Naive thymus-derived CD8-positive, alpha-beta T cell (primary cell): ENCODE measurements at regions of chr7 and their contacts with region 1.

Region 1: GRCh38 chr7:42931834-42932651 is at the starts of genes MRPL32 and PSMA2:
- DNase-seq: peak; percentile 81 to 97 (median 94)
- ATAC-seq: peak; percentile 99
- H3K4me3 Mint-ChIP-seq: peak within 1 kb of the TSS; percentile 89 to 100 (median 99)
- H3K27ac Mint-ChIP-seq: peak within 1 kb of the TSS; percentile 96 to 99 (median 98)
- H3K4me1 Mint-ChIP-seq: peaks cover 24 to 81% (median 63%) of the 10 kb centered on the region in 4 donors
- H3K27me3 Mint-ChIP-seq: no peaks in the 10 kb centered on the region
- polyA plus RNA-seq, gene MRPL32: 27.6 to 43.5 (median 30.7) TPM
- polyA plus RNA-seq, gene PSMA2: 199 to 265 (median 216) TPM

Region 2: GRCh38 chr7:42880392-42880791 is 51.7 kb before region 1 on chr7:
- POLR2A ChIA-PET with region 1: no interaction called
- DNase-seq: no peak
- ATAC-seq: no peak
- H3K4me3 Mint-ChIP-seq: no peak overlapping the region
- H3K27ac Mint-ChIP-seq: no peak overlapping the region
- H3K4me1 Mint-ChIP-seq: no peaks in the 10 kb centered on the region
- H3K27me3 Mint-ChIP-seq: peaks cover 0 to 2% (median 0%) of the 10 kb centered on the region in 5 donors

Region 3: GRCh38 chr7:42911454-42912447 is 20.3 kb before region 1 on chr7 and contains the start of gene C7orf25:
- POLR2A ChIA-PET with region 1: interaction called, 30 read pairs
- DNase-seq: peak; percentile 93 to 97 (median 95)
- ATAC-seq: peak; percentile 88 to 93
- H3K4me3 Mint-ChIP-seq: peak within 1 kb of the TSS; percentile 84 to 97 (median 93)
- H3K27ac Mint-ChIP-seq: peak within 1 kb of the TSS; percentile 89 to 97 (median 95)
- H3K4me1 Mint-ChIP-seq: peaks cover 37 to 76% (median 58%) of the 10 kb centered on the region in 4 donors
- H3K27me3 Mint-ChIP-seq: no peaks in the 10 kb centered on the region
- polyA plus RNA-seq, gene C7orf25: 1.9 to 3.3 (median 3.0) TPM